GM10248 (cell line): ENCODE measurements at regions of chr1 and their contacts with region 1.

Region 1: GRCh38 chr1:44594871-44595746 is 79.2 kb downstream of the TMEM53 start:
- DNase-seq: peak; percentile 92
- CTCF ChIP-seq: peak; percentile 97

Region 2: GRCh38 chr1:44217809-44218410 is 377.2 kb before region 1 on chr1:
- CTCF ChIA-PET with region 1: interaction called, 46 read pairs
- POLR2A ChIA-PET with region 1: no interaction called
- DNase-seq: peak; percentile 73
- CTCF ChIP-seq: peak; percentile 87

Region 3: DNA sequence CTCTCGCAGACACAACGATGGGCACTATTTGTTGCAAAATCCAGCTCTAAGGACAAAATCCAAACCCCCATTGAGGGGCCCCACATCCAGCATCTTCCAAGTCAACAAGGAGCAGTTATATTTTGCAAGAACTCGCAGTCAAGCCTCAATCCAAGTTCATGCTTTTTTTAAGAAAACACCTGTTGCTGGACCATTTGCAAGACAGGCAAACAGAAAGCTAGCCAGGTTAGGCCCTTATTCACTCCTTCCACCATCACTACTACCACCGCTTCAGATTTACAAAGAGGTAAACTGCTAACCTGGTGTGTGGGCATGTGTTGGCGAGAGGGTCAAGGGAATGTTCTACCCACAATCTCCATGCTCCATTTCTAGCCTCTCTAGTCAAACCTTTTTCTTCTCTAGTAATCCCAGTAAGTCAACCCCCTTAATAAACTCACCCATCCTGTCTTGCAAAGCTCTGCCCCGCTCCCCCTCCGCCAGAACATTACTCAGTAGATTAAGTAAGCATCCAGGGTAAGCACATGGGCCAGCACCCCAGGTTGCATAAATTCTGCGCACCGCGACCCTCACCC is 240.8 kb before region 1 on chr1:
- CTCF ChIA-PET with region 1: interaction called, 14 read pairs
- POLR2A ChIA-PET with region 1: no interaction called
- DNase-seq: no peak
- CTCF ChIP-seq: no peak

Region 4: GRCh38 chr1:44377925-44378784 is 217.0 kb before region 1 on chr1:
- CTCF ChIA-PET with region 1: interaction called, 106 read pairs
- POLR2A ChIA-PET with region 1: no interaction called
- DNase-seq: peak; percentile 59
- CTCF ChIP-seq: peak; percentile 56

Region 5: DNA sequence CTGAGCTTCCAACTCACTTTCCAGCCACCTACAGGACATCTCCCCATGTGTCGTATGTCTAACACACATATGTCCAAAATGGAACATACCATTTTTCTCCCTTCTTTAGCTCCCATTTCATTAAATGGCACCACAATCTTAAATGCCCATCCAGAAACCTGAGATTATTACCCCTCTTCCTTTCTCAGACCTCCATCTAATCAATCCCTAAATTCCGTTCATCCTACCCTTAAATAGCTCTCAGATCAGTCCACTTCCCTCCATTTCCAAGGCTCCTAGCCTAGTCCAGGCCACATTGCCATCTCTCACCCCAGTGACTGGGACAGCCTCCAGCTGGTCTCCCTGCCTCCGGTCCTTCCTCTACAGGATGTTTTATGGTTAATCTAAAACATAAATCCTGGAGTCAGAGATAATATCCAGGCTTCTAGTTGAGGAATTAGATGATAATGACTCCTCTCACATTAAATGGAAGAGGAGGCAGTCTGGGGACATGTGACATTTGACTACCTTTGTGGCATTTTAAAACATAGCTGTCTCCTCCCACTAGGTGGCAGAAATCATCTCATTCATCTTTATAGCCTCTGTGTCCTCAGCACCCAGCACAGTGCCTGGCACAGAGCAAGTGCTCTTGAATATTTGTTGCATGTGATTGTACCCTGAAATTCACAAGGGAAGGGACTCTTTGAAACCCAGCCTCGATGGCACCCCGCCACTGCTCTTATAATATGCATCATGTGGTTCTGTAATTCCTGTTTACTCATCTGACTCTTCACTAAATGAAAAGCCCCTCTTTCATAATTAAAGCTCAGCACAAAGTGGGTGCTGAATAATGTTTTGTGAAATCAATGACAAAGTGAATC is 23.2 kb before region 1 on chr1:
- CTCF ChIA-PET with region 1: interaction called, 15 read pairs
- POLR2A ChIA-PET with region 1: no interaction called
- DNase-seq: peak; percentile 62
- CTCF ChIP-seq: peak; percentile 54

Region 6: DNA sequence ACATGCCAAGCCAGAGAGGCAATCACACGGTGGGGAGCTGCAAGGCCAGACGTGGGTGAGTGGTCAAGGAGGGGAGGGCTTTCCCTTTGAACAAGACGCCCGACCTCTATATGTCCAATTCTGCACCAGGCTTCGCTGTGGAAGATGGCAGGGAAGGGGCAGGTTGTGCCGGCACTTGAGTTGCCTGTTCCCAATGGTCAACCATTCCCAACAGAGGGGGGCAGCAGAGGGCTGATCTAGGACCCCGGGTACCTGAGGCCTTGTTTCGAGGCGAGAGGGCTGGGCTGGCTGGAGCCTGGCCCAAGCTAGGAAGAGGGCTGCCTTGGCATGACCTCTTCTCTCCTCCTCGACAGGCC is 14.3 kb after region 1 on chr1:
- CTCF ChIA-PET with region 1: interaction called, 19 read pairs
- POLR2A ChIA-PET with region 1: no interaction called
- DNase-seq: peak; percentile 67
- CTCF ChIP-seq: peak; percentile 42

Region 7: DNA sequence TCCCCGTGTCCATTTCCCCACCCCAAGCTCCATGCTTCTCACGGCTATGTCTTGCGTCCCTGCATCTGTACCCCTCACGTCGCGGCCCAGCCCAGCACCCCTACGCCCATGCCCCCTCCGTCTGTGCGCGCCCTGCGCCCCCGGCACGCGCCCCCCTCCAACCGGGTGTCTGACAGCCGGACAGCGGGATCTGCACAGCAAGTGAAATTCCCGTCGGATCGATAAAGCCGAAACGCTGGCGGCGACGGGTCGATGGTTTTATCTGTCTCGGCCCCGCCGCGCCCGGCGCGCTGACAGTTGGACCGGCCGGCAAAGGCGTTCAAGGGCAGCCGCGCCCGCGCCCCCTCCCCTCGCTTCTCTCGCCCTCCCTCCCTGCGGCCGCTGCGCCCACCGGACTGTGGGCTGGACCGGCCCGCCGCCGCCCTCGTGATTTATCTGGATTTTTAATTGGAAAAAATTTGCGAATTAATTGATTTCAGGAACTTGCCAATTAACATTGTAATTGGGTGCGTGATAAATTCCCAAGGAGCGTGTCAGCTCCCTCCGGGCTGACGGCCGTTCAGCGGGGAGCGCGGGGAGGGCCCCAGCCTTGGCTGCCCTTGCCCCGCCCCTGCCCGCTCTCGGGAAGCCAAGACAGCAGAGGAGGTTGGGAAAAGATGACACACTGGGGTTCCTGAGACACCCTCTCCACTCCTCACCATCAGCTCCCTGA is 22.0 kb after region 1 on chr1:
- CTCF ChIA-PET with region 1: interaction called, 19 read pairs
- POLR2A ChIA-PET with region 1: no interaction called
- DNase-seq: no peak
- CTCF ChIP-seq: no peak

Region 8: DNA sequence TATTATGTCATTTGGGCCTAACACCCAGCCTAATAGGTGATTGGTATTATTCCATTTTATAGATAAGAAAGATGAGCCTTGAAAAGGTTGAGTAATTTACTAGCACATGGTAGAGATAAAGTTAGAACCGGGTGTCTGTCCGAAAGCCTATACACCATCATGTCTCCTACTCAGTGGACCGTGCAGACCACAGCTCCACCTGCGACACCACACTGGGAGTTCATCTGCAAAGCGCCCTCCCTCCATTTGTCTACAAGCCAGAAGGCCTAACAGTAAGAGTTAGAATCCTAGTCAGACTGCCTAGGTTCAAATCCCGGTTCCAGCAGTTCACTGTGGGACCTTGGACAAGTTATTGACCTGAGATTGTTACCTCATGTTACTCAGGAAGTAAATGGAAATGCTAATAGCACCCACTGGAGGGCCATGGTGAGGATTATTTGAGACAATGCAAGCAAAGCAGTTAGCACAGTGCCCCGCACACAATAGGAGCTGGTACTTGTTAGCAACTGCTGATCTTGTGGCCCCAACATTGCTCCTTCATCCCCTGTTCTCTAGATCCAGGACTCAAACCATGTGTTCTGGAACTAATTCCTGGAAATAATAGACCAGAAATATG is 99.9 kb after region 1 on chr1:
- CTCF ChIA-PET with region 1: no interaction called
- POLR2A ChIA-PET with region 1: no interaction called
- DNase-seq: peak; percentile 67
- CTCF ChIP-seq: no peak